ENCODE measurements at regions of chr7 and their contacts with region 1.

Region 1: DNA sequence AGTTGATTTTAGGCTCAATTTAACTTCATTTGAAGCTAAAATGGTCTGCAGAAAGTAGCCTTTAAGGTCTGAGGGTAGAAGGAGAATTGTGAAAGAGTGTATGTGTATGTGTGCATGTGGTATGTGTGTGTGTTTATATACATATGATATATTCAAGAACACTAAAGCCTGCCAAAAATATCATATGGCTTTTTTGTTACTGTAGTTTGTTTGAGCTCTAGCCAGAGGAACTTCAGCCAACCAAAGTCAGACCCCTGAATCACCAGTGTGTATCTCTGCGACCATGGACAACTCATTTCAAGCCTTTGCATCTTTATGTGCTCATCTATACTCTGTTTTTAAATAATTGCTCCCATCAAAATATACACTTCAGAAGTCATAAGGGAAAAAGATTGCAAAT is 58.4 kb upstream of the HDAC9 start:
- DNase-seq: no peak
- ATAC-seq: no peak
- H3K4me3 ChIP-seq: no peak overlapping the region
- H3K27ac ChIP-seq: no peak overlapping the region
- H3K4me1 ChIP-seq: no peaks in the 10 kb centered on the region
- H3K27me3 ChIP-seq: no peaks in the 10 kb centered on the region
- CTCF ChIP-seq: no peak
- EP300 ChIP-seq: no peak
- POLR2A ChIP-seq: no peak
- RAD21 ChIP-seq: no peak

Region 2: GRCh38 chr7:16867328-16867727 is 1569.8 kb before region 1 on chr7:
- CTCF ChIA-PET with region 1: no interaction called
- POLR2A ChIA-PET with region 1: no interaction called
- in situ Hi-C with region 1: no loop called
- intact Hi-C with region 1: loop called (anchors 5 kb)
- DNase-seq: no peak
- ATAC-seq: no peak
- H3K4me3 ChIP-seq: no peak overlapping the region
- H3K27ac ChIP-seq: no peak overlapping the region
- H3K4me1 ChIP-seq: no peaks in the 10 kb centered on the region
- H3K27me3 ChIP-seq: no peaks in the 10 kb centered on the region
- CTCF ChIP-seq: no peak
- EP300 ChIP-seq: no peak
- POLR2A ChIP-seq: no peak
- RAD21 ChIP-seq: no peak

Region 3: GRCh38 chr7:18648849-18649758 is 212.0 kb after region 1 on chr7:
- CTCF ChIA-PET with region 1: no interaction called
- POLR2A ChIA-PET with region 1: no interaction called
- in situ Hi-C with region 1: no loop called
- intact Hi-C with region 1: no loop called
- DNase-seq: no peak
- ATAC-seq: no peak
- H3K4me3 ChIP-seq: no peak overlapping the region
- H3K27ac ChIP-seq: no peak overlapping the region
- H3K4me1 ChIP-seq: no peaks in the 10 kb centered on the region
- H3K27me3 ChIP-seq: no peaks in the 10 kb centered on the region
- CTCF ChIP-seq: no peak
- EP300 ChIP-seq: no peak
- POLR2A ChIP-seq: no peak
- RAD21 ChIP-seq: no peak

Measured in HepG2 (cell line).